ENCODE measurements at regions of chr1 and their contacts with region 1.

Region 1: DNA sequence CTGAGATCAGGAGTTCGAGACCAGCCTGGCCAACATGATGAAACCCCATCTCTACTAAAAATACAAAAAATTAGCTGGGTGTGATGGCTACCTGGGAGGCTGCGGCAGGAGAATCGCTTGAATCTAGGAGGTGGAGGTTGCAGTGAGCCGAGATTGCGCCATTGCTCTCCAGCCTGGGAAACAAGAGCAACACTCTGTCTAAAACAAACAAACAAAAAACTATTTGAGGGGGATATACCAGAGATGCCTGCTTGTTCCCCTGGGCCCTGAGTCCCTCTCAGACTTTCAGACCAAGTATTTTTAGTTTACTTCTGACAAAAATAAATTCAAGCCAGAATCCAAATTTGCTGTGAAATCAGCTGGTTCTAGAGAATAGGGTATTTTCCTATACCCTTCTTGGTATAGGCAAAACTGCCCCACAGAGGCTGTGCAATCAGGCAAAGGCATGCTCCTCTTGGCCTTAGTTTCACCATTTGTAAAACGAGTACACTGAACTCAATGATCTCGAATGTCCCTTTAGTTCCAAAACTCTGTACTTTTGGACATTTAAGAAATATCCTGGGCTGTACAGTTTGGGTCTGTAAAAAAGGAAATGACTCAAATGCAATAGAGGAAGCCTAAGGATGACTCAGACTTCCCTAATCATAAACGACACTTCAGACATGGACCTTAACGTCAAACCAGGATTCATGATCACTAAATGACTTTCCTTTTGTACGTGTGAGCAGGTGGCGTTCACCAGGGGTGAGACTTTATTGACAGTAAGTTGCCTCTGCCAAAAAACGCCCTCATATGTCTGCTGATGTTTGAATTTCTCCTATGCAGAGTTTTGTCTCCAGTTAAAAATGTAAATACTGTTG is 16.1 kb downstream of the ENSA start:
- DNase-seq: peak; percentile 84
- H3K4me3 Mint-ChIP-seq: peak overlapping the region; percentile 78
- H3K27ac Mint-ChIP-seq: peak overlapping the region; percentile 95
- H3K4me1 Mint-ChIP-seq: peaks cover 55% of the 10 kb centered on the region
- H3K27me3 Mint-ChIP-seq: no peaks in the 10 kb centered on the region

Region 2: GRCh38 chr1:150567717-150568593 is 45.3 kb before region 1 on chr1:
- intact Hi-C with region 1: loop called (anchors 1 kb)
- DNase-seq: peak; percentile 90
- H3K4me3 Mint-ChIP-seq: peak overlapping the region; percentile 94
- H3K27ac Mint-ChIP-seq: peak overlapping the region; percentile 99
- H3K4me1 Mint-ChIP-seq: peaks cover 74% of the 10 kb centered on the region
- H3K27me3 Mint-ChIP-seq: no peaks in the 10 kb centered on the region

Region 3: GRCh38 chr1:150596095-150596892 is 17.0 kb before region 1 on chr1:
- intact Hi-C with region 1: no loop called
- DNase-seq: no peak
- H3K4me3 Mint-ChIP-seq: no peak overlapping the region
- H3K27ac Mint-ChIP-seq: no peak overlapping the region
- H3K4me1 Mint-ChIP-seq: peaks cover 2% of the 10 kb centered on the region
- H3K27me3 Mint-ChIP-seq: no peaks in the 10 kb centered on the region